PC-9 (cell line): ENCODE measurements at regions of chr12 and their contacts with region 1.

Region 1: GRCh38 chr12:54359033-54359761 is 5.1 kb downstream of the GPR84 start:
- DNase-seq: peak; percentile 94 to 98
- H3K4me3 ChIP-seq: peak overlapping the region; percentile 85
- H3K27ac ChIP-seq: peak overlapping the region; percentile 28; the same call in 1 of the 2 replicates
- H3K4me1 ChIP-seq: peaks cover 14% of the 10 kb centered on the region
- H3K27me3 ChIP-seq: no peaks in the 10 kb centered on the region
- CTCF ChIP-seq: no peak

Region 2: DNA sequence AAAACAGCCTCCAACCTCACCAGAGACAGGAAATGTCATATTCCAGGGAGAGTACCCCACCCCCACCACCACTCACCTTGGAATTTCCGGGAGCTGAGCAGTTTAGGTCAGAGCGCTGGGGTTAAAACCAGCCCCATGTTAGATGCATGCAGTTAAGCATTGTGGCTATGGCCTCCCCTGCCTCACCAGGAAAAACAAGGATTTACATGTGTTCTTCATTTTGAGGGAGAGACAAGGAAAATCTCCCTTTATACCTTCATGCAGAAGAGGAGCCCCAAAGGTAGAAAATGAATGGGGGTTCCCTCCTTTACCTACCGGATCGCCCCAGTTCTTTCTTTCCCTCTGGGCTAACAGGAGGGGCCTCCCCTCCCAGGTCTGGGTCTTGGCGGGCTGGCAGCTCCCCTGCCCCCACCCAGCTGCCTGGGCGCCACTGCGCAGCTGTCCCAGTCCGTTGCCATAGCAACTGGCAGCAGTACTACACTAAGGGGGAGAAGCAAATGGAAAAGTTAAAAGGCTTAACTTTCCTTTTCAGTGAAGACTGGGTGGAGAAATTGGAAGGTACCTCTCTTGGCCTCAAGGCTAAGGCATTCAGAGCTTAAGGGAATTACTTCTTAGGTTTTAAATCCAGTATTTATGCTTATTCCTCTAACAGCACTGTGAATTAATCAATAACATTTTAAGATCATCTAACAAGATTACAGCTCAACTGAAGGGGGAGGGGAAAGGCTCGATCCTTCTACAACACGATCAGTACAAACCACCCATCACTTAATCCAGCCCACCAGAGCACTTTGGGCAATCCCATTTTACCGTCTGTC is 99.8 kb before region 1 on chr12:
- CTCF ChIA-PET with region 1: no interaction called
- POLR2A ChIA-PET with region 1: interaction called, 16 read pairs
- intact Hi-C with region 1: loop called (anchors 10 kb)
- DNase-seq: no peak
- H3K4me3 ChIP-seq: no peak overlapping the region
- H3K27ac ChIP-seq: no peak overlapping the region
- H3K4me1 ChIP-seq: peaks cover 10% of the 10 kb centered on the region; the same call in 1 of the 2 replicates
- H3K27me3 ChIP-seq: no peaks in the 10 kb centered on the region
- CTCF ChIP-seq: no peak

Region 3: DNA sequence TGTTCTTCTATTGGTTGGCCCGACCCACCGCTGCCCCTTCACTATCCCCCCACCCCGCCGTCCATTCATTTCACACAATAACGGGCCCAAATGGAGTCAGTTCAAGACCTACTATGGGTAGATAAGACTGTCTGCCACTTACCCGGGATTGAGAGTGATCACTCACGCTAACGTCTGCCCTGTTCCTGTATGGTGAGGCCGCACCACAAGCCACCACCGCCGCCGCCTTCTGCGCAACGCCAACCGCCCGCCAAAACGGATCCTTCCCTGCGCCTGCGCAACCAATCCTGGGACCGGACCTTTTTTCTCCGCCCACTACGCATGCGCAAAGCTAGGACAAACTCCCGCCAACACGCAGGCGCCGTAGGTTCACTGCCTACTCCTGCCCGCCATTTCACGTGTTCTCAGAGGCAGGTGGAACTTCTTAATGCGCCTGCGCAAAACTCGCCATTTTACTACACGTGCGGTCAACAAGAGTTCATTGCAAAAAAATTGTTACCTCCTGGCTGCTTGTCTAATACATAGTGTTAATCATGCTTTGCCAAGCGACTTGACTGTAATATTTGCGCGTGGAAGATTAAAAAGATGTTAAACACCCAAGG is 79.2 kb before region 1 on chr12 and contains the start of gene CBX5:
- CTCF ChIA-PET with region 1: no interaction called
- POLR2A ChIA-PET with region 1: interaction called, 4 read pairs
- intact Hi-C with region 1: loop called (anchors 2 kb)
- DNase-seq: peak; percentile 96 to 98
- H3K4me3 ChIP-seq: peak within 1 kb of the TSS; percentile 82
- H3K27ac ChIP-seq: peak within 1 kb of the TSS; percentile 94
- H3K4me1 ChIP-seq: peaks cover 38% of the 10 kb centered on the region
- H3K27me3 ChIP-seq: no peaks in the 10 kb centered on the region
- CTCF ChIP-seq: no peak
- total RNA-seq, gene CBX5: 108 and 154 TPM in 2 replicates

Region 4: GRCh38 chr12:54294152-54294952 is 64.8 kb before region 1 on chr12:
- CTCF ChIA-PET with region 1: no interaction called
- POLR2A ChIA-PET with region 1: no interaction called
- intact Hi-C with region 1: loop called (anchors 2 kb)
- DNase-seq: peak in 1 of 2 experiments; percentile 54
- H3K4me3 ChIP-seq: no peak overlapping the region
- H3K27ac ChIP-seq: no peak overlapping the region
- H3K4me1 ChIP-seq: peaks cover under 1% of the 10 kb centered on the region; the same call in 1 of the 2 replicates
- H3K27me3 ChIP-seq: no peaks in the 10 kb centered on the region
- CTCF ChIP-seq: peak; percentile 93